ENCODE measurements at regions of chr18 and their contacts with region 1.

Region 1: DNA sequence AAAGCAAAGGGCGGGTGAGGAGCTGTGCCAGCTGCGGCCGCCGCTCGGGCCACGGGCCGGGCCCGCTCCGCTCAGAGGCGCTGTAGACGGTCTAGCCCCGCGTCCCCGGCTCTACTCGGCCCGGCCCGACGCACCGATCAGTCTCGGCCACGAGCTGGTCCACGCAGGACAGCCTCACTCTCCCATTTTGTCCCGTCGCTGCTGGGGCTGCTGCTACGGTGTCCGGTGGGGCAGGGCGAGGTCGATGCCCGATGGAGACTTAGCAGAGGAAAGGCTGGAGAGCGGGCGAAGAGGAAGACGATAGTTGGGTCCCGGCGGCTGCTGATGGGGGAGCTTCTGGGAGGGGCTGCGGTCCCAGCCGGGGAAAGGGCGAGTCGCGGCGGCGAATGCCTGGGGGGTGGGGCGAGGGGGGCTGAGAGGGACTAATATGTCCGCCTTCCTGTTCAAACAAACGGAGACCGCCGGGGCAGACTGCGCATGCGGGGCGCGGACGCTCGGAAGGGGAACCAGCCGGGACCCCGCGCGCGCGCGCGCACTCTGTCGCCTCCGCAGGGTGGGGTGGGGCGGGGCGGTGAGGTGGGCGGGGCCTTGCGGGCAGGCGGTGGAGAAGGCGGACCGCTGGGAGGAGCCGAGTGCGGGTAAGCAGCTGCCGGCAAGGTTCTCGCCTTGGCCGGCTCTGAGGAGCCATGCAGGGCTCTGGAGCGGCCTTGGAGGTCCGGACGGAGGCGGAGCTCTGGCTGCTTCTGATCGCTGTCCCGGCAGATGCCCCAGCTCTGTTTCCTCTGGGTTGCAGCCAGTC is at the start of gene ROCK1:
- DNase-seq: peak; percentile 99
- H3K4me3 Mint-ChIP-seq: no peak within 1 kb of the TSS
- H3K27ac Mint-ChIP-seq: peak within 1 kb of the TSS; percentile 97
- H3K4me1 Mint-ChIP-seq: peaks cover 21% of the 10 kb centered on the region
- H3K27me3 Mint-ChIP-seq: peaks cover 3% of the 10 kb centered on the region
- total RNA-seq, gene ROCK1: 54.7 and 56.5 TPM in 2 replicates

Region 2: GRCh38 chr18:20971886-20972267 is 139.7 kb before region 1 on chr18:
- intact Hi-C with region 1: loop called (anchors 5 kb)
- DNase-seq: no peak
- H3K4me3 Mint-ChIP-seq: no peak overlapping the region
- H3K27ac Mint-ChIP-seq: no peak overlapping the region
- H3K4me1 Mint-ChIP-seq: peaks cover 1% of the 10 kb centered on the region
- H3K27me3 Mint-ChIP-seq: no peaks in the 10 kb centered on the region

Region 3: DNA sequence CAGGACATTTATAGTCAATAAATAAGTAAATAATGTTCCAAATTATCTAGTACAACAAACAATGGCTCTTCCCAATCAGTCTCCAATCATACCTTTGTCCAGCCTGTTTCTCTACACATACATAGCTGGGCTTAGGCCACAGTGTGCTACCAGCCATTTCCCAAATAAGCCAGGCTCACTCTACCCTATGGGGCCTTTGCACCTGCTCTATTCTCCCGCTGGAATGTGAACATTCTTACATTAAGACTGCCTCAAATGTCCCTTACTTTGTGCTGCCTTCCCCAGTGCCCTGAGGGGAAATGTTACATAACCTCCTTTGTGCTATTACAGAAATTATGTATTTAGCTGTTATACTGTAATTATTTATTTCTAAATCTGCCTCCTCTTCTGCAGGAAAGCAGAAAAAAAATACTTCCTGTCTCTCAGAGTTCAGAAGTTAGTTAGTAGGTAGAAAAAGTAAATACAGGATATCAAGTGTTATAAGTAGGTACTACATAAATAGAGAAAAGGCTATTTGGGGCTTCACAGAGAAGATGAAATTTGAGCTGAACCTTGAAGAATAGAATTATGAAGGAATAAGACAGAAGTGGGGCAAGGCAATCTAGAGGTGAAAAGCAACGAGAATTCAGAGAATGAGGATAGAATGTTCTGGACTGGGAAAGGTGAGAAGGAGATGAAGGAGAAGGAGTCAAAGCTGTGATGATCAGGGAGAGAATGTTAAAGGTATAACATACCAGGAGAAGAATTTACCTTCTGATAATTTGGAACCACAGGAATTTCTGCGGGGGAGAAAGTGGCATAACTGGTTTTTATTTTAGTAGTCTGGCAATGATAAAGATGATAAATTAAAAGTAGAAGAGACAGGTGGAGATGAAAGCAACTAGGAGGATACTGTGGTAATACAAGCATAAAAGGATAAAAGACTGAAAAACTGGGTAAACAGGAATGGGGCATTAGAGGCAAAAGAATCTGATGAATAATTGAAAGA is 36.9 kb before region 1 on chr18:
- intact Hi-C with region 1: loop called (anchors 2 kb)
- DNase-seq: no peak
- H3K4me3 Mint-ChIP-seq: no peak overlapping the region
- H3K27ac Mint-ChIP-seq: no peak overlapping the region
- H3K4me1 Mint-ChIP-seq: peaks cover 28% of the 10 kb centered on the region
- H3K27me3 Mint-ChIP-seq: no peaks in the 10 kb centered on the region

Region 4: DNA sequence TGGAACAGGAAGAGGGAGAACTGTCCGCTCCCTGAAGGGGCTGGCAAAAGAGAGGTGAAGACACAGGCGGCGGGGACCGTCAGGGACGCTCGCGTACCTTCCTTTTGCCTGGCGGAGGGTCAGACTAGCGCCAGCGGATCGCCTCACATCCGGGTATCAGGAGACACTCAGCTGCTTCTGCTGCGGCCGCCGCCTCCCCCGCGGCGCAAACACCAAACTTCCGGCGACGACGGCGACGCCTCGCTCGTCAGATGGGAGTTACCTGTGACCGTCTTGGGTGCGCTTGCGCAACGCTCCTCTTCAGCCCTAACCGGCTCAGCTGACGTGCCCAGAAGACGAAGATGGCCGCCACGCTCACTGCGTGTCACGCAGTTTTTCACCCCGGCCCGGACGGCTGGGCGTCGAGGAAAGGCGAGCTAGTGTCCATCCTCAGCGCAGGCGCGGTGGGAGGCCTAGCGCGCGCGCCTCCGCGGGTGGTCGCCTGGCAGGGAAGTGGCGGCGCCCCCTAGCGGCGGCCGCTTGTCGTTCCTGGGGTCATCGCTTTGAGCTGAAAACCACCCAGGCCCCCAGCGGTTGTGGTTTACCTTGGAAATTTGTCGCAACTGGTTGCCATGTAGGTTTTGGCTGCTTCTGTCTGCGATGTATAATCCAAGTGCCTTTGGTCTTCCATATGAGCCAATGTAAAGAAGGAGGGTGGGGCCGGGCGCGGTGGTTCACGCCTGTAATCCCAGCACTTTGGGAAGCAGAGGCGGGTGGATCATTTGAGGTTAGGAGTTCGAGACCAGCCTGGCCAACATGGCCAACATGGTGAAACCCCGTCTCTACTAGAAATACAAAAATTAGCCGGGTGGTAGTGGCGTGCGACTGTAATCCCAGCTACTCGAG is 489.2 kb after region 1 on chr18 and contains the start of gene ESCO1:
- intact Hi-C with region 1: loop called (anchors 2 kb)
- DNase-seq: peak; percentile 98
- H3K4me3 Mint-ChIP-seq: peak within 1 kb of the TSS; percentile 94
- H3K27ac Mint-ChIP-seq: peak within 1 kb of the TSS; percentile 95
- H3K4me1 Mint-ChIP-seq: peaks cover 26% of the 10 kb centered on the region
- H3K27me3 Mint-ChIP-seq: no peaks in the 10 kb centered on the region
- total RNA-seq, gene ESCO1: 20.0 and 21.5 TPM in 2 replicates

Region 5: DNA sequence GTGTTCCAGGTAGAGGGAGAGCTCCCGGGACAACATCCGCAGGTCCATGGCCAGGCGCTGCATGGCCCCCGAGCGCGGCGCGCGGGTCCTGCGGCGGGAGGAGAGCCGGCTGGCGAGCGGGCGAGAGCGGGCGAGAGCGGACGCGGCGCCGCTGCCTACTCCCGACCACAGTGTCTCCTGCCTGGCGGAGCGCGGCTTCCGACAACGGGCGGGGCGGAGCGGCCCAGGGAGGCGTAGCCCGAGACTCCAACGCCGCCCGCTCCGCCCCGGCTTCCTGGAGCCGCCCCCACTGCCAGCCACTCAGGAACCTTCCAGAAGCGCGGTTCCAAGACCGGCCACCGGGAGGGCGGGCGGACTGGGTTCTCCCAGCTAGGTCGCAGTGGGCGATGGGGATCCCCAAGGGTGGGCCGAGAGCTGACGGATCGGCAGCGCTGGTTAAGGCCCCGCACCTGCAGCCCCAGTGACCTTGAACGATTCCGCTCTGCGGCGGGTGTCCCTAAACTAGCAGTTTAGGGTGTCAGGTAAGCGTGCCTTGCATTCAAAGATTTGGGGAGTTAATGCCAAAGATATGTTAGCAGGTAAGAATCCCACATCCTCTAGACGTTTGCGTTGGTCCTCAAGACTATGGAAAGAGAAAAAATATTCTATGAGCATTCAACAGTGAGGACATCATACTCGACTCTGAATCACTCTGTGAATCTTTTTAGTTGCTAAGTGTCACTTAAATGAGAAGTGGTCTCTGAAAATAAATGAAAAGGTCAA is 593.2 kb after region 1 on chr18 and contains the start of gene ABHD3:
- intact Hi-C with region 1: loop called (anchors 2 kb)
- DNase-seq: peak; percentile 98
- H3K4me3 Mint-ChIP-seq: peak within 1 kb of the TSS; percentile 98
- H3K27ac Mint-ChIP-seq: peak within 1 kb of the TSS; percentile 96
- H3K4me1 Mint-ChIP-seq: peaks cover 26% of the 10 kb centered on the region
- H3K27me3 Mint-ChIP-seq: no peaks in the 10 kb centered on the region
- total RNA-seq, gene ABHD3: 29.3 and 31.1 TPM in 2 replicates

Measured in activated CD4-positive, alpha-beta T cell treated with anti-CD3 and anti-CD28 coated beads, Interleukin-2, amount 10 ng/mL, durations not matched to agents 24 days and 14 days (primary cell).